ENCODE measurements at regions of chrX and their contacts with region 1.

Region 1: GRCh38 chrX:153763989-153764755 is at the start of gene PLXNB3:
- DNase-seq: peak; percentile 57 to 87 (median 71)
- ATAC-seq: peak; percentile 91
- H3K4me3 ChIP-seq: no peak within 1 kb of the TSS
- H3K4me3 Mint-ChIP-seq: no peak within 1 kb of the TSS
- H3K27ac ChIP-seq: no peak within 1 kb of the TSS
- H3K27ac Mint-ChIP-seq: no peak within 1 kb of the TSS
- H3K4me1 ChIP-seq: peaks cover 9% of the 10 kb centered on the region
- H3K4me1 Mint-ChIP-seq: peaks cover 4% of the 10 kb centered on the region
- H3K27me3 ChIP-seq: no peaks in the 10 kb centered on the region
- H3K27me3 Mint-ChIP-seq: no peaks in the 10 kb centered on the region
- CTCF ChIP-seq: peak; percentile 65
- total RNA-seq, gene PLXNB3: not detected

Region 2: GRCh38 chrX:153735274-153735673 is 28.9 kb before region 1 on chrX:
- CTCF ChIA-PET with region 1: no interaction called
- POLR2A ChIA-PET with region 1: no interaction called
- intact Hi-C with region 1: no loop called
- DNase-seq: peak in 3 of 14 experiments; percentile 42 to 66 (median 49)
- ATAC-seq: peak; percentile 48
- H3K4me3 ChIP-seq: no peak overlapping the region
- H3K4me3 Mint-ChIP-seq: peak overlapping the region; percentile 20
- H3K27ac ChIP-seq: no peak overlapping the region
- H3K27ac Mint-ChIP-seq: peak overlapping the region; percentile 53
- H3K4me1 ChIP-seq: peaks cover 21% of the 10 kb centered on the region
- H3K4me1 Mint-ChIP-seq: peaks cover 20% of the 10 kb centered on the region
- H3K27me3 ChIP-seq: no peaks in the 10 kb centered on the region
- H3K27me3 Mint-ChIP-seq: no peaks in the 10 kb centered on the region
- CTCF ChIP-seq: no peak

Region 3: DNA sequence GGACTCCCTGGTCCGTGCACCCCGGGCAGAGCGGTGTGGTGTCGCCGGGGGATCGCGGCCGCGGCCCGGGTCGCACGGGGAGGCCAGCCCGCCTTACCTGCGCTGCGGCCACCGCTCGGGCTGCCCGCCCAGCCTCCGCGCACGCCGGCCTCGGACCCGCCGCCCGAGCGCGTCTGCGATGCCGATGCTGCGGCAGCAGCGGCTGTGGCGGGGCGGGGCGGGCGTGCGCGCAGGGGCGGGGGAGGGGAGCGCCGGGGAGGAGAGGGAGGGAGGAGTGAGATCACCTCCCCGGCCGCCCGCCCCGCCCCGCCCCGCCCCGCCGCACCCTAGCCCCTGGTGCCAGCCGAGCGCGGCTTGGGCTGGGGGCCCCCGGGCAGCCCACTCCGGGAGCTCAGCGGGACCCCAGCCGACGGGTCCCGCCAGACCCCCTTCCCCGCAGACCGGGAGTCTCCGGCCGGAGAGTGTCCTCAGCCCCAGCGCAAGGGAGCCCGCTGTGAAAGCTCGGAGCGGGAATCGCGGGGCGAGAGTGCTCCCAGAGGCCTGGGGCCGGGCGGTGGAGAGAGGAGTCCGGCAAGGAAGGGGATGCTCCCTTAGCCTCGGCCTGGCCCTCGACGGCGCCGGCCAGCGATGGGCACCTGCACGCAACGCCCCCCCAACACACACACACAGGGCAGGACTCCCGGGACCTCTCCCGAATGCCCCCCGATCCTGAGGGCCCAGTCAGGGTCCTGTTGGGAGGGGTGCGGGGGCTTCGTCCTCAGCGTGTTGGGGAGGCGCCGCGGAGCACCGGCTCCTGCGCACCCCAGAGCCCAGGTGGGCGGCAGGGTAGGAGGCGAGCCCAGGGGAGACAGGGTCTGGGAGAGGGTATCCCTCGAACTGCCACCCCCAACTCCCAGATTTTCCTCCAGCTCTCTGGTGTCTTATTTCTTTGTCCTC is 122.1 kb after region 1 on chrX and contains the start of gene L1CAM:
- CTCF ChIA-PET with region 1: no interaction called
- POLR2A ChIA-PET with region 1: no interaction called
- intact Hi-C with region 1: loop called in 1 of 2 experiments (anchors 10 kb)
- DNase-seq: peak in 7 of 14 experiments; percentile 10 to 68 (median 35)
- ATAC-seq: peak; percentile 66
- H3K4me3 ChIP-seq: peak within 1 kb of the TSS; percentile 14
- H3K4me3 Mint-ChIP-seq: peak within 1 kb of the TSS; percentile 48
- H3K27ac ChIP-seq: no peak within 1 kb of the TSS
- H3K27ac Mint-ChIP-seq: no peak within 1 kb of the TSS
- H3K4me1 ChIP-seq: peaks cover 15% of the 10 kb centered on the region
- H3K4me1 Mint-ChIP-seq: no peaks in the 10 kb centered on the region
- H3K27me3 ChIP-seq: peaks cover 17 to 45% of the 10 kb centered on the region in 2 experiments
- H3K27me3 Mint-ChIP-seq: peaks cover 10% of the 10 kb centered on the region
- CTCF ChIP-seq: no peak
- total RNA-seq, gene L1CAM: 0.89 to 1.2 TPM

Region 4: GRCh38 chrX:153947009-153947769 is 183.0 kb after region 1 on chrX:
- CTCF ChIA-PET with region 1: interaction called, 4 read pairs
- POLR2A ChIA-PET with region 1: no interaction called
- intact Hi-C with region 1: loop called in 1 of 2 experiments (anchors 1 kb)
- DNase-seq: peak; percentile 62 to 89 (median 74)
- ATAC-seq: peak; percentile 89
- H3K4me3 ChIP-seq: no peak overlapping the region
- H3K4me3 Mint-ChIP-seq: peak overlapping the region; percentile 39
- H3K27ac ChIP-seq: no peak overlapping the region
- H3K27ac Mint-ChIP-seq: peak overlapping the region; percentile 57
- H3K4me1 ChIP-seq: peaks cover 47% of the 10 kb centered on the region
- H3K4me1 Mint-ChIP-seq: peaks cover 10% of the 10 kb centered on the region
- H3K27me3 ChIP-seq: no peaks in the 10 kb centered on the region
- H3K27me3 Mint-ChIP-seq: no peaks in the 10 kb centered on the region
- CTCF ChIP-seq: peak; percentile 84

Region 5: DNA sequence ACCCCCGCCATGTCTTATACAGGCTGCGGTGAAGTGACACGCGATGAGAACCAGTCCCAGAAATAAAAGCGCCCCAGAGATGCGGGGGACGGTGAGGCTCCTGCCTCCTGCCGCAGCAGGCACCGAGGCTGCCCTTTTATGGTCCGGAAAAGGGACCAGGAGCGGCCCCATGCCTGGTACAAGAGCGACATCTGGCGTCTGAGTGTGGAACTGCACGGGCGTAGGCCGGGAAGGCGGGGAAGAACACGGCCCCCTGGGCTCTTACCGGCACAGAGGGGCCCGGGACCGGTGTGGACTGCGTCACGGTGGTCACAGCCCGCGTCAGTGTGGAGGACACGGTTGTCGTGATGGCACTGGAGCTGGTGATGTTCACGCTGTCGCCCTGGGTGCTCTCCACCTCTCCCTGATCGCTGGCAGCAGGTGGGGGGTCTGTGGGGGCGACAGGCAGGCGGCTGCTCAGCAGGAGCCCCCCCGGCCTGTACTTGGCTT is 189.2 kb after region 1 on chrX:
- CTCF ChIA-PET with region 1: no interaction called
- POLR2A ChIA-PET with region 1: no interaction called
- intact Hi-C with region 1: loop called (anchors 1 kb)
- DNase-seq: peak; percentile 62 to 84 (median 76)
- ATAC-seq: peak; percentile 81
- H3K4me3 ChIP-seq: no peak overlapping the region
- H3K4me3 Mint-ChIP-seq: peak overlapping the region; percentile 25
- H3K27ac ChIP-seq: no peak overlapping the region
- H3K27ac Mint-ChIP-seq: no peak overlapping the region
- H3K4me1 ChIP-seq: peaks cover 18% of the 10 kb centered on the region
- H3K4me1 Mint-ChIP-seq: peaks cover 9% of the 10 kb centered on the region
- H3K27me3 ChIP-seq: no peaks in the 10 kb centered on the region
- H3K27me3 Mint-ChIP-seq: no peaks in the 10 kb centered on the region
- CTCF ChIP-seq: peak; percentile 79

Measured in CD4-positive, alpha-beta T cell (primary cell).